Ovary (tissue), 10 donors: ENCODE measurements at regions of chr16 and their contacts with region 1.

Region 1: GRCh38 chr16:57316390-57317017 is 32.0 kb upstream of the PLLP start:
- DNase-seq: peak in 1 of 5 donors; percentile 41
- H3K4me3 ChIP-seq: no peak overlapping the region
- H3K27ac ChIP-seq: no peak overlapping the region
- H3K4me1 ChIP-seq: no peaks in the 10 kb centered on the region
- H3K27me3 ChIP-seq: no peaks in the 10 kb centered on the region
- CTCF ChIP-seq: no peak
- EP300 ChIP-seq: no peak
- POLR2A ChIP-seq: no peak

Region 2: DNA sequence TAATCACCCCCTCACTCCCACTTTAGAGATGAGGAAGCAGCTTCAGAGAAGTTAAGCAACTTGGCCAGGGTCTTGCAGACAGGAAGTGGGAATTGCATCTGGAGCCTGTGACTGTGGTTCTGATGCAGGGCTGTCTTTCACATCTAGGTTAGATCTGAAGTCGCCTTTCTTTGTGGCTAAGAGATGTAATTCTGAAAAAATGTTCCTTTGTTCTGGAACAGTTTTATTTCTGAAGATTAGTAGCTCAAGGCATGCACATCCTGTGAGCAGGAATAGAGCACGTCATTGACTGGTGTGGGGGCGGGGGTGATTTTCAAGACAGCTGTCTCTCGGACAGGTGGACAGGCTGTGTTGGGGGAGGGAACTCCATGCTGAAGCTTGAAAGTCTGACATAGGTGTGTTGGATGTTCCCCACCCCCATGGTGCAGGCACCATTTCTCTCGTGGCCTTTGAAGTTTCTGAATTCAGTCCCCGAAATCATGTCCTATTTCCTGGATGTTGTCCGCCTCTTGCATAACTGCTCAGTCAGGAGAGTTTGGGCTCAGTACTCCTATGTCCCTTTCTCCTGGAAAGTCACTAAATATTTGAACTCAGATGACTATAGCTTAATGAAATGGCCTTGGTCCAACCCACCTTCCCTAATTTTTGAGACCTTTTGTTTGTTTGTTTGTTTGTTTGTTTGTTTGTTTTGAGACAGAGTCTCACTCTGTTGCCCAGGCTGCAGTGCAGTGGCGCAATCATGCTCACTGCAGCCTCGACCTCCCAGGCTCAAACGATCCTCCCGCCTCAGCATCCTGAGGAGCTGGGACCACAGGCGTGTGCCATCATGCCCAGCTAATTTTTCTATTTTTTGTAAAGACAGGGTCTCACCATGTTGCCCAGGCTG is 405.6 kb before region 1 on chr16:
- intact Hi-C with region 1: no loop called
- DNase-seq: no peak
- H3K4me3 ChIP-seq: no peak overlapping the region
- H3K27ac ChIP-seq: no peak overlapping the region
- H3K4me1 ChIP-seq: peaks cover 28% of the 10 kb centered on the region
- H3K27me3 ChIP-seq: no peaks in the 10 kb centered on the region
- CTCF ChIP-seq: no peak
- EP300 ChIP-seq: no peak
- POLR2A ChIP-seq: no peak

Region 3: DNA sequence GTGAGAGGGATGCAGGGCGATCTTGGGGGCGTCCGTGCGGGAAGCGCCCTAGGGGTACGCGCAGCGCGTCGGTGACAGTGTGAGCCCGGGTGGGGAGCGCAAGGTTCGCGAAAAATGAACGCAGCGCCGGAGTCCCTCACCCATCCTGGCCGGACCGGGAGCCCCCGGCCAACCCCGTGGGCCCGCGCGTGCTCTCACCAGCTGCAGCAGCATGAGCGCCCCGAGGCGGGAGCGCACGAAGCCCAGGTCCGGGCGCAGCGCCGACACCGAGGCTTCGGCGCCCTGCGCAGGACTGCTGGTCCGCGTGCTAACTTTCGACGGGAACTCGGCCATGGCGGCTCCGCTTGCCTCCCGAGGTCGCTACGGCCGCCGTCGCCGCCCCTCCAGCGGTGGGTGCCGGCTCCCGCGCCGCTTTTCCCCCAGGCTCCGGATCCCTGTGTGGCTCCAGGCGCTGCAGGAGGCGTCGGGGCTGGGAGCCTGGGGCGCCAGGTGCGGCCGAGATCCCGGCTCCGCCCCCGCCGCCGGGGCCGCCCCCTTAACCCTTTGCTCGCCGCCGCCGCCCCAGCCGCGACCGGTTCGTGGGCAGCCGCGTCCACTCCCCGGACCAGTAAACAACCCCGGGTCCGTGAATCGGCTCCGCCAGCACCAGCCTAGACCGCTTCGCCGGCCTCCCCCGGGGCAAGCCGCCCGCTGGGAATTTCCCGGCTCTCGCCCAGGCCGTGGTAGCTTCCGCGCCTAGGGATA is 32.1 kb before region 1 on chr16 and contains the start of gene PLLP:
- intact Hi-C with region 1: no loop called
- DNase-seq: peak in 2 of 5 donors; percentile 51
- H3K4me3 ChIP-seq: peak within 1 kb of the TSS; percentile 37
- H3K27ac ChIP-seq: no peak within 1 kb of the TSS
- H3K4me1 ChIP-seq: peaks cover 7% of the 10 kb centered on the region
- H3K27me3 ChIP-seq: no peaks in the 10 kb centered on the region
- CTCF ChIP-seq: no peak
- EP300 ChIP-seq: no peak
- POLR2A ChIP-seq: no peak
- total RNA-seq, gene PLLP: 0.94 to 54.2 (median 4.0) TPM

Region 4: GRCh38 chr16:57349212-57350031 is 32.9 kb after region 1 on chr16:
- intact Hi-C with region 1: no loop called
- DNase-seq: no peak
- H3K4me3 ChIP-seq: no peak overlapping the region
- H3K27ac ChIP-seq: no peak overlapping the region
- H3K4me1 ChIP-seq: no peaks in the 10 kb centered on the region
- H3K27me3 ChIP-seq: no peaks in the 10 kb centered on the region
- CTCF ChIP-seq: no peak
- EP300 ChIP-seq: no peak
- POLR2A ChIP-seq: no peak

Region 5: DNA sequence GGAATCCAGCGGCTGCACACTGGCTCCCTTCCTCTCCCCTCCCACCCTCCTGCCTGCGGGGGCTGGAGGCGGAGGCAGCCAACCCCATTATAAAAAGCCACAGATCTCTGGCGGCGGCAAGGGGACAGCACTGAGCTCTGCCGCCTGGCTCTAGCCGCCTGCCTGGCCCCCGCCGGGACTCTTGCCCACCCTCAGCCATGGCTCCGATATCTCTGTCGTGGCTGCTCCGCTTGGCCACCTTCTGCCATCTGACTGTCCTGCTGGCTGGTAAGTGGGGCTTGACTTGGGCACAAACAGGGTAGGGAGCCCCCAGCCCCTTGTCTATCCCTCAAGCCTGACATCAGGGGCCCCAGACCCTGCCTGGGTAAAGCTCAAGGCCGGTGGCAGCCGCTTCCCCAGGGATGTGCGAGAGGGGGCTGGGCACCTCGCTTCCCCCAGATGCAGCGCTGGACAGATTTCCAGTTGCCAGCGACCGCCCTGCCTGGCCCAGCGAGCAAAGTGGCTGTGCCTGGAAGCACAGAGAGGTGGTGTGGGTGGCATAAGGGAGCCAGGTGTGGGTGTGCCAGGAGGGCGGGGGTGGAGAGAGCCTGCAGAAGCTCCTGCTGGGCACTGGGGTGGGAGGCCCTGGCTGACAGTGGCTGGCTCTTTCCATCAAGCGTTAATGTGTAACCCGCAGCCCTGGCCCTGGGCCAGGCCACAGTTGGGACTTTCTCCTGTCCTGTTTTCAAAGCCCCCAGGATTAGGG is 56.0 kb after region 1 on chr16 and contains the start of gene CX3CL1:
- intact Hi-C with region 1: loop called in 1 of 4 experiments (anchors 5 kb)
- DNase-seq: peak in 4 of 5 donors; percentile 34 to 53 (median 47)
- H3K4me3 ChIP-seq: peak within 1 kb of the TSS; percentile 38
- H3K27ac ChIP-seq: no peak within 1 kb of the TSS
- H3K4me1 ChIP-seq: peaks cover 2% of the 10 kb centered on the region
- H3K27me3 ChIP-seq: no peaks in the 10 kb centered on the region
- CTCF ChIP-seq: no peak
- EP300 ChIP-seq: no peak
- POLR2A ChIP-seq: peak; percentile 44
- total RNA-seq, gene CX3CL1: 2.2 to 12.2 (median 6.6) TPM

Region 6: GRCh38 chr16:57720142-57720575 is 403.7 kb after region 1 on chr16:
- intact Hi-C with region 1: no loop called
- DNase-seq: no peak
- H3K4me3 ChIP-seq: no peak overlapping the region
- H3K27ac ChIP-seq: no peak overlapping the region
- H3K4me1 ChIP-seq: no peaks in the 10 kb centered on the region
- H3K27me3 ChIP-seq: no peaks in the 10 kb centered on the region
- CTCF ChIP-seq: no peak
- EP300 ChIP-seq: no peak
- POLR2A ChIP-seq: no peak